Activated B cell treated with CpG ODN at 0.5 μM for 24 hours (primary cell): ENCODE measurements at regions of chr7 and their contacts with region 1.

Region 1: GRCh38 chr7:108452722-108453121 is 3.5 kb downstream of the NRCAM start:
- DNase-seq: no peak
- ATAC-seq: peak; percentile 56
- H3K4me3 Mint-ChIP-seq: no peak overlapping the region
- H3K27ac Mint-ChIP-seq: no peak overlapping the region
- H3K4me1 Mint-ChIP-seq: peaks cover 26% of the 10 kb centered on the region
- H3K27me3 Mint-ChIP-seq: peaks cover 40% of the 10 kb centered on the region
- CTCF ChIP-seq: no peak

Region 2: DNA sequence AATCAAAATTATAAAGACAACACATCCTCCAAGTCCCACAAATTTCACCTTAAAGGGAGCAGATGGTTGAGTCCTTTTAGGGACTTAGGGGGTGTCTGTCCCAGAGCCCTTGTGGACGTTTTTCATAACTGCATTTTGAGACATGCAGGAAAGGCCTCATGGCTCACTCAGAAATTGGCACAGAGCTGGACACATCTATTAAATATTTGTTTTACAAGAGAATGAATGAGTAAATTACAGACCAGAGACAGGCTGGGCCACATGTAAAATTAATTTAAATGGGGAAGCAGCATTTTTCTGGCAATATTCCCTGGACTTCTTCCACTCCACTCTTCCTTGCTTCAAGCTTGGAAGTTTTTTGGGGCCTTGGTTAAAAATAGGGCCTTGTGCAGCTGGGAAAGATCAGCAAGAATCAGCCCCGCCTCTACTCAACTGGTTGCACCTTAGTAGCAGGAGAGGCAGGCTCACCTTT is 469.8 kb before region 1 on chr7:
- CTCF ChIA-PET with region 1: no interaction called
- POLR2A ChIA-PET with region 1: no interaction called
- intact Hi-C with region 1: no loop called
- DNase-seq: no peak
- ATAC-seq: no peak
- H3K4me3 Mint-ChIP-seq: no peak overlapping the region
- H3K27ac Mint-ChIP-seq: no peak overlapping the region
- H3K4me1 Mint-ChIP-seq: no peaks in the 10 kb centered on the region
- H3K27me3 Mint-ChIP-seq: peaks cover 7% of the 10 kb centered on the region
- CTCF ChIP-seq: no peak

Region 3: DNA sequence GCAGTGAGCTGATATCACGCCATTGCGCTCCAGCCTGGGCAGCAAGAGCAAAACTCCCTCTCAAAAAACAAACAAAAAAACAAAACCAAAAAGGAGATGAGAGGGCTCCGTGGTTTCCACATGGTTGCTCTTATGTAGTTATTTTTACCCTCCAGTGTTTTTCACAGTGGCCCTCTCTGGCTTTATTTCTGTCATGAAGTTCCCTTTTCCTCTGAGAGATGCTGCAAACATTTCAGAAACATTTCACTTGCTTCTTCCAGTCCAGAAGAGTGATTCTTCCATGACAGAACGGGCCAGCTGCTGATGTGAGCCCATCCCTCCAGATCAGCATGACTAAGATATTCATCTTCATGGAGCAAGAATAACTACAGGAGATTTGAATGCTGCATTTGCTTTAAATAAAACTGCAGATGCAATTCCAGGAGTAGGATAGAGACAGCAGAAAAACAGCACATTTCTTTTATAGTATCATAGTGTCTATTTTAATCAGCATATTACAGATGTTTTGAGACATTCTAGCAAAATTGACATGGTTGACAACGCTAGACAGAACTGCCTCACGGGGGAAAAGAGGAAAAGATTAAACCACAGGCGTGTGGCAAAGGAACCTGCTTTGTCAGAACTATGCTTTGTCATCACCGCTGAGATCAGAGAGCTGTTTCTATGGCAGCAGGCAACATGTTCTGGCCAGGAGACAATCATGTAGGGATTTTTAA is 36.7 kb before region 1 on chr7:
- CTCF ChIA-PET with region 1: interaction called, 3 read pairs
- POLR2A ChIA-PET with region 1: no interaction called
- intact Hi-C with region 1: loop called (anchors 2 kb)
- DNase-seq: no peak
- ATAC-seq: peak; percentile 75
- H3K4me3 Mint-ChIP-seq: peak overlapping the region; percentile 72
- H3K27ac Mint-ChIP-seq: peak overlapping the region; percentile 84
- H3K4me1 Mint-ChIP-seq: peaks cover 70% of the 10 kb centered on the region
- H3K27me3 Mint-ChIP-seq: peaks cover 9% of the 10 kb centered on the region
- CTCF ChIP-seq: no peak

Region 4: GRCh38 chr7:108589874-108590273 is 137.2 kb after region 1 on chr7:
- CTCF ChIA-PET with region 1: no interaction called
- POLR2A ChIA-PET with region 1: no interaction called
- intact Hi-C with region 1: no loop called
- DNase-seq: no peak
- ATAC-seq: no peak
- H3K4me3 Mint-ChIP-seq: no peak overlapping the region
- H3K27ac Mint-ChIP-seq: no peak overlapping the region
- H3K4me1 Mint-ChIP-seq: no peaks in the 10 kb centered on the region
- H3K27me3 Mint-ChIP-seq: peaks cover 3% of the 10 kb centered on the region
- CTCF ChIP-seq: no peak